ENCODE measurements at regions of chr10 and their contacts with region 1.

Region 1: GRCh38 chr10:11270135-11270857 is 252.6 kb downstream of the CELF2 start:
- DNase-seq: peak; percentile 53
- ATAC-seq: peak; percentile 99
- H3K4me3 ChIP-seq: no peak overlapping the region
- H3K27ac ChIP-seq: no peak overlapping the region
- H3K4me1 ChIP-seq: no peaks in the 10 kb centered on the region
- H3K27me3 ChIP-seq: no peaks in the 10 kb centered on the region; the same call in 1 of the 2 replicates
- CTCF ChIP-seq: peak; percentile 73
- POLR2A ChIP-seq: no peak
- RAD21 ChIP-seq: peak; percentile 83

Region 2: DNA sequence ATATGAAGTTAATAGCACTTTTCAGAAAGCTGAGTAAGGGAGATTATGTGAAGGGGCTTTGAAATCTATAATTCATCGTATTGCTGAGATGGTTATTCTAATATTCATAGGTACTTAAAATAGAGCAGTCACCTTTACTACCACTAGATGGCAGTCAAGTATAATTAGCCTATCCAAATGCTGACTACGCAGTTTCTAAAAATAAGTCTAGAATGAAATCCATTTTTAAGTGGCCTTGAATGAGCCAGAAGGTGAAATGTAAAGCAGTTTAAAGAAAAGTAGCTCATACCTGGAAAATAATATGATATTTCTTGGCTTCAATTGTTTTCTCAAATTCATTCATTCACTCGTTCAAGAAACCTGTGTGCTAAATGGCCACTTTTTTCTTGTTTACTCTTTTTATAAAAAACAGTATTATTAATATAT is 1938.7 kb before region 1 on chr10:
- CTCF ChIA-PET with region 1: no interaction called
- POLR2A ChIA-PET with region 1: no interaction called
- dilution Hi-C with region 1: no loop called
- in situ Hi-C with region 1: loop called (anchors 10 kb)
- intact Hi-C with region 1: loop called (anchors 1 kb)
- DNase-seq: peak; percentile 65
- ATAC-seq: peak; percentile 77
- H3K4me3 ChIP-seq: no peak overlapping the region
- H3K27ac ChIP-seq: no peak overlapping the region
- H3K4me1 ChIP-seq: no peaks in the 10 kb centered on the region
- H3K27me3 ChIP-seq: no peaks in the 10 kb centered on the region; the same call in 1 of the 2 replicates
- CTCF ChIP-seq: peak; percentile 92
- POLR2A ChIP-seq: no peak
- RAD21 ChIP-seq: peak; percentile 80

Region 3: GRCh38 chr10:11472158-11472753 is 202.0 kb after region 1 on chr10:
- CTCF ChIA-PET with region 1: no interaction called
- POLR2A ChIA-PET with region 1: no interaction called
- dilution Hi-C with region 1: no loop called
- in situ Hi-C with region 1: no loop called
- intact Hi-C with region 1: loop called (anchors 1 kb)
- DNase-seq: peak; percentile 41
- ATAC-seq: peak; percentile 90
- H3K4me3 ChIP-seq: no peak overlapping the region
- H3K27ac ChIP-seq: no peak overlapping the region
- H3K4me1 ChIP-seq: peaks cover 3% of the 10 kb centered on the region
- H3K27me3 ChIP-seq: no peaks in the 10 kb centered on the region
- CTCF ChIP-seq: peak; percentile 58
- POLR2A ChIP-seq: no peak
- RAD21 ChIP-seq: peak; percentile 75